Common myeloid progenitor, CD34-positive (primary cell): ENCODE measurements at regions of chr17 and their contacts with region 1.

Region 1: DNA sequence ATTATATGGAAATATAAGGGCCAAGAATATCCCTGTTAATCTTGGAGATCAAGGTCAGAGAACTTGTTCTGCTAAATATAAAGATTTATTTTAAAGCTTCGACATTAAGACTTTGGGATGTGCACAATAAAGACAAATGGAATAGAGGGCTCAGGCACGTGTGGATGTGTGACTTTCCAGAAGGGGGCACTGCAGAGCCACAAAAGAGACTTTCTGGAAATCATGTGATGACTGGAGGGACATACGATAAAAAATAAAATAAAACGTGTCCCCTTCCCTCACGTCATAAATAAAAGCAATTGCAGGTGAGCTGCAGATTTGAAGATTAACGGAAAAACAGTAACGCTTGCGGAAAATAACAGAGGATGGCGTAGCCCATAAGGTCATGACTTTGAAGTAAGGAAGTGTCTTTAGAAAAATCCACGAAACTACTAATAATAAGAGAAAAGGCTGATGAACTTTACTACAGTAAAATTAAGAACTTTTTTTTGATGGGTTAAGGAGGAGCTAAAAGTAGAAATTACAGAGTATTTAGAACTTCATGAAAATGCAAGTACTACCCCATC is 9.4 kb upstream of the ENGASE start:
- DNase-seq: peak; percentile 57 to 78 (median 71)
- H3K4me3 ChIP-seq: no peak overlapping the region
- H3K27ac ChIP-seq: no peak overlapping the region
- H3K4me1 ChIP-seq: peaks cover 0 to 1% (median 0%) of the 10 kb centered on the region in 4 experiments
- H3K27me3 ChIP-seq: no peaks in the 10 kb centered on the region

Region 2: DNA sequence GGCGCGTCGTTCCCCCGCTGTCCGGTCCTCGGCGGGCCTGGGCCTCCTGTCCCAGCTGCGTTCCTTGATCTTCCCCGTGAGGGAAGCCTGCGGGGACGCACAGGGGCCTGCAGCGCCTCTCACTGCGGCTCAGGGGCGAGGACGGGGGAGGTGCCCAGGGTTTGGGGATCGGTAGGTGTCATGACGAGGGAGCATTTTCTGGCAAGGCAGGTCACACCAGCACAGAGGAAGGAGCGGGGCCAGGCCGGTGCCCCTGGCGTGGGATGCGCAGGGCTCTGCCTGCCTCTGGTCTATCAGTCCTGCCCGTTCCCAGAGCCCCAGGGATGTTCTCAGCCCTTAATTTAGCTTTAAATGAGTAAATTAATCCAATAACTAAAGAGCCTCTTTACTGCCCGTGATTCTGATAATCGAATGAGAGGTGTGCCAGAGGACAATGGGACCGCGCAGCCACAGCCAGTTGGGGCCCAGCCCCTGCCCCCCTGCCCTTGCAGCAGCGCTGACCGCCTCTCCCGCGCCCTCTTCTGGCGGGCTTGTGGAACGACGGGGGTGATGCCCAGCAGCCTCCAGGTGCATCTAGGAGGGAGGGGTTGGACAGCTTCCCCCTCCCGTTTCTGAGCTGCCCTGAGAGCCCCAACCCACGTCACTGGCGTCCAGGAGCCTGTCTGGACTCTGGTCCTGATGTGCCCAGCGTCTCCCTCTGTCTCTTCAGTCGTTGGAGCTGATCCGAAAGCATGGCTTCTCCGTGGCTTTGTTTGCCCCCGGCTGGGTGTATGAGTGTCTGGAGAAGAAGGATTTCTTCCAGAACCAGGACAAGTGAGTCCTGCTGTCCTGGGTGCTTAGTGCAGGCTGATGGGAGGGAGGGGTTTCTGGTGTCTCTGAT is 17.4 kb after region 1 on chr17:
- CTCF ChIA-PET with region 1: interaction called, 11 read pairs
- POLR2A ChIA-PET with region 1: no interaction called
- DNase-seq: peak; percentile 26 to 45 (median 45)
- H3K4me3 ChIP-seq: no peak overlapping the region
- H3K27ac ChIP-seq: no peak overlapping the region
- H3K4me1 ChIP-seq: no peaks in the 10 kb centered on the region
- H3K27me3 ChIP-seq: no peaks in the 10 kb centered on the region

Region 3: GRCh38 chr17:79087428-79088143 is 22.4 kb after region 1 on chr17:
- CTCF ChIA-PET with region 1: interaction called, 11 read pairs
- POLR2A ChIA-PET with region 1: no interaction called
- DNase-seq: peak; percentile 34 to 71 (median 54)
- H3K4me3 ChIP-seq: no peak overlapping the region
- H3K27ac ChIP-seq: no peak overlapping the region
- H3K4me1 ChIP-seq: no peaks in the 10 kb centered on the region
- H3K27me3 ChIP-seq: peaks cover 0 to 4% (median under 1%) of the 10 kb centered on the region in 5 experiments